Aorta (tissue), 5 donors: ENCODE measurements at regions of chr1 and their contacts with region 1.

Region 1: GRCh38 chr1:46603858-46604549 is at the start of gene MKNK1:
- DNase-seq: peak; percentile 98 to 100
- ATAC-seq: peak; percentile 96
- H3K4me3 ChIP-seq: peak within 1 kb of the TSS; percentile 48 to 83
- H3K27ac ChIP-seq: peak within 1 kb of the TSS in 1 of 2 donors; percentile 49
- H3K4me1 ChIP-seq: peaks cover 0 to 2% of the 10 kb centered on the region in 2 donors
- H3K27me3 ChIP-seq: no peaks in the 10 kb centered on the region
- total RNA-seq, gene MKNK1: 64.2 to 111 TPM

Region 2: GRCh38 chr1:46718727-46719622 is 115.0 kb after region 1 on chr1 and contains the start of gene EFCAB14:
- intact Hi-C with region 1: loop called in 1 of 2 experiments (anchors 5 kb)
- DNase-seq: peak; percentile 96 to 99
- ATAC-seq: peak; percentile 99
- H3K4me3 ChIP-seq: peak within 1 kb of the TSS; percentile 60 to 82
- H3K27ac ChIP-seq: no peak within 1 kb of the TSS
- H3K4me1 ChIP-seq: no peaks in the 10 kb centered on the region
- H3K27me3 ChIP-seq: no peaks in the 10 kb centered on the region
- total RNA-seq, gene EFCAB14: 101 to 108 TPM